GM12878 (cell line): ENCODE measurements at regions of chr7 and their contacts with region 1.

Region 1: DNA sequence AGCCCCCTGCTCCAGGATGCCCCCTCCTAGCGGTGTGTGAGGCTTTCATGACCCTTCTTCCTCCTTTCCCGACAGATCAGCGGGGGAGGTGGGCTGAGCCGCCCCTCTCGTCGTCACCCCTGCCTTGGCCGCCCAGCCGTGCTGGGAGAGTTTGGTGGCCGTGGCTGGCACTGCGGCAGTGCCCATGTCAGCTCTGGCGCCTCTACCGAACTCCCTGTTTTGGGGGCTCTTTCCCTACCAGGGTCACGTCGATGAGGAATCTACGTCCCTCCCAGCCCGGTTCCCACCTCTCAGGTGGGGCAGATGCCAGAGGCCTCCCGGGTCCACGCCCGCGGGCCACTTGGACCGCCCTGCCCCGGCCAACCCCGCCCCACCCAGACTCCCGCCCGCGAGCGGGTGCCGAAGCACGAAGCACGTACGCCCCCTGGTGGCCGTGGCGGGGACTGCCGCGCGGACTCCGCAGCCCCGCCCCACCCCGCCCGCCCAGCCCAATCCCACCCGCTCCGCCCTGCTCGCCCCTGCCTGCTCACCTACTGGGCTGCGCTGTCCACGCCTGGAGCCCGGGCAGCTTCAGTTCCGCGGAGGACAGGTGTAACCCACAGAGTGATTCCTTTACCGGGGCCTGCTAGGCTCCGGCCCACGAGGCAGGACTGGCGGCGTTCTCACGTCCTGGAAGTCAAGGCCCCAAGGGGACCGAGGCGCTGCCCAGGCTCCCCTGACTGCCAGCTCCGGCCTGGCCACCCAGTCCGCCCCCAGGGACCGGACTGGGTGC is 127.1 kb downstream of the UBE2H start:
- DNase-seq: no peak
- ATAC-seq: peak; percentile 88
- H3K4me3 ChIP-seq: peak overlapping the region; percentile 79
- H3K27ac ChIP-seq: no peak overlapping the region
- H3K4me1 ChIP-seq: peaks cover 4% of the 10 kb centered on the region
- H3K27me3 ChIP-seq: no peaks in the 10 kb centered on the region
- CTCF ChIP-seq: peak; percentile 37 to 72 (median 70); a peak in 4 of 6 replicates
- EP300 ChIP-seq: no peak
- POLR2A ChIP-seq: peak; percentile 61; the same call in 1 of the 2 replicates
- RAD21 ChIP-seq: peak; percentile 77

Region 2: DNA sequence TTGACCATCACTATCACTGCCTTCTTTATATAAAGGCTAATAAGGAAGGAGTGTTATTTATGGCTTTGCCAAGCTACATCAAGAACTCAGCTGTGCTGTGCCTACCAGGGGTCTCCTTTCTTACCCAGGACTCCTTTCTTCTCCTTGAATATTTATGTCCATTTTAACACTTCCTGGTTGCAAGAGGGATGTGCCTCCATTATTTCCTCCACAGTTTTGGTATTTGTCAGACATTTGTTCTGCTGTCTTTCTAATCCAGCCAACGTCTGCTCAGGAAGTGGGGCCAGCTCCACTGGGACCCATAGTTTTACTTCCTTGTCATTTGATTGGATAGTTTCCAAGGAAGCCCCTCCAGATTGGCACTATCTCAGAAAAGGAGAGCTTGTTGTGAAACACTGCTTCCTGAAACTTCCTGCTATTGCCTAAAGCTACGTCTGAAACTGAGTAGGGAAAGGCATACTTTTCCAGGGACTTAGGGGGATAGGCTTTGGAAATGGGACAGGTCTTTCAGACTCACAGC is 398.1 kb before region 1 on chr7:
- CTCF ChIA-PET with region 1: no interaction called
- POLR2A ChIA-PET with region 1: no interaction called
- RAD21 ChIA-PET with region 1: no interaction called
- SMC1A ChIA-PET with region 1: no interaction called
- in situ Hi-C with region 1: no loop called
- intact Hi-C with region 1: no loop called
- DNase-seq: no peak
- ATAC-seq: no peak
- H3K4me3 ChIP-seq: no peak overlapping the region
- H3K27ac ChIP-seq: no peak overlapping the region
- H3K4me1 ChIP-seq: no peaks in the 10 kb centered on the region
- H3K27me3 ChIP-seq: no peaks in the 10 kb centered on the region
- CTCF ChIP-seq: no peak
- EP300 ChIP-seq: no peak
- POLR2A ChIP-seq: no peak
- RAD21 ChIP-seq: no peak

Region 3: DNA sequence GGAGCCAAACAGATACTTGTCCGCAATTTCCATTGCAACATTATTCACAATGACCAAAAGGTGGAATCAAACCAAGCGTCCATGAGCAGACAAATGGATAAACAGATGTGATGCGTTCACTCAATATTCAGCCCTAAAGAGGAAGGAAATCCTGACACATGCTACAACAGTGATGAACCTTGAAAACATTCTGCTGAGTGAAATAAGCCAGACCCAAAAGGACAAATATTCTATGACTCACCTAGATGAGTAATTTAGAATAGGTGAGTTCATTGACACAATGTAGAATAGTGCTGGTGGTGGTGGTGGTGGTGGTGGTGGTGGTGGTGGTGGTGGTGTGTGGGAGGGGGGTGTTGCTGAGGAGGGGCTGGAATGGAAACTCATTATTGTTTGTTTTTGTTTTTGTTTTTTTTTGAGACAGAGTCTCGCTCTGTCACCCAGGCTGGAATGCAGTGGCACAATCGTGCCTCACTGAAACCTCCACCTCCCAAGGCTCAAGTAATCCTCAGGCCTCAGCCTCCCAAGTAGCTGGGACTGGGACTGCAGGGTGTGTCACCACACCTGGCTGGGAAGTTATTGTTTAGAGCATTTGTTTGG is 294.8 kb before region 1 on chr7:
- CTCF ChIA-PET with region 1: no interaction called
- POLR2A ChIA-PET with region 1: no interaction called
- RAD21 ChIA-PET with region 1: no interaction called
- SMC1A ChIA-PET with region 1: no interaction called
- in situ Hi-C with region 1: no loop called
- intact Hi-C with region 1: no loop called
- DNase-seq: no peak
- ATAC-seq: peak; percentile 77
- H3K4me3 ChIP-seq: no peak overlapping the region
- H3K27ac ChIP-seq: no peak overlapping the region
- H3K4me1 ChIP-seq: no peaks in the 10 kb centered on the region
- H3K27me3 ChIP-seq: no peaks in the 10 kb centered on the region
- CTCF ChIP-seq: no peak
- EP300 ChIP-seq: no peak
- POLR2A ChIP-seq: no peak
- RAD21 ChIP-seq: no peak

Region 4: GRCh38 chr7:129635300-129636029 is 190.2 kb before region 1 on chr7:
- CTCF ChIA-PET with region 1: interaction called, 13 read pairs
- POLR2A ChIA-PET with region 1: no interaction called
- RAD21 ChIA-PET with region 1: interaction called, 4 read pairs
- SMC1A ChIA-PET with region 1: interaction called, 3 read pairs
- in situ Hi-C with region 1: no loop called
- intact Hi-C with region 1: no loop called
- DNase-seq: peak; percentile 47
- ATAC-seq: peak; percentile 100
- H3K4me3 ChIP-seq: no peak overlapping the region
- H3K27ac ChIP-seq: no peak overlapping the region
- H3K4me1 ChIP-seq: peaks cover 7% of the 10 kb centered on the region
- H3K27me3 ChIP-seq: no peaks in the 10 kb centered on the region
- CTCF ChIP-seq: peak; percentile 85 to 89 (median 89)
- EP300 ChIP-seq: no peak
- POLR2A ChIP-seq: no peak
- RAD21 ChIP-seq: peak; percentile 85

Region 5: GRCh38 chr7:129664029-129665012 is 161.4 kb before region 1 on chr7:
- CTCF ChIA-PET with region 1: interaction called, 12 read pairs
- POLR2A ChIA-PET with region 1: no interaction called
- RAD21 ChIA-PET with region 1: interaction called, 3 read pairs
- SMC1A ChIA-PET with region 1: interaction called, 8 read pairs
- in situ Hi-C with region 1: loop called (anchors 5 kb)
- intact Hi-C with region 1: loop called (anchors 1 kb)
- DNase-seq: peak; percentile 11
- ATAC-seq: peak; percentile 55
- H3K4me3 ChIP-seq: no peak overlapping the region
- H3K27ac ChIP-seq: no peak overlapping the region
- H3K4me1 ChIP-seq: no peaks in the 10 kb centered on the region
- H3K27me3 ChIP-seq: no peaks in the 10 kb centered on the region
- CTCF ChIP-seq: peak; percentile 18 to 56 (median 46); a peak in 4 of 6 replicates
- EP300 ChIP-seq: no peak
- POLR2A ChIP-seq: no peak
- RAD21 ChIP-seq: peak; percentile 78

Region 6: GRCh38 chr7:129840757-129841156 is 15.1 kb after region 1 on chr7:
- CTCF ChIA-PET with region 1: interaction called, 10 read pairs
- POLR2A ChIA-PET with region 1: interaction called, 3 read pairs
- RAD21 ChIA-PET with region 1: interaction called, 5 read pairs
- SMC1A ChIA-PET with region 1: interaction called, 8 read pairs
- in situ Hi-C with region 1: no loop called
- intact Hi-C with region 1: no loop called
- DNase-seq: no peak
- ATAC-seq: no peak
- H3K4me3 ChIP-seq: no peak overlapping the region
- H3K27ac ChIP-seq: no peak overlapping the region
- H3K4me1 ChIP-seq: peaks cover 8% of the 10 kb centered on the region; the same call in 1 of the 2 replicates
- H3K27me3 ChIP-seq: no peaks in the 10 kb centered on the region
- CTCF ChIP-seq: no peak
- EP300 ChIP-seq: no peak
- POLR2A ChIP-seq: no peak
- RAD21 ChIP-seq: no peak